Calu3 (cell line): ENCODE measurements at regions of chr20 and their contacts with region 1.

Region 1: GRCh38 chr20:47456952-47457724 is 44.5 kb upstream of the NCOA3 start:
- DNase-seq: peak; percentile 31
- H3K4me3 Mint-ChIP-seq: no peak overlapping the region
- H3K27ac Mint-ChIP-seq: no peak overlapping the region
- H3K4me1 Mint-ChIP-seq: peaks cover 43% of the 10 kb centered on the region
- H3K27me3 Mint-ChIP-seq: no peaks in the 10 kb centered on the region
- CTCF ChIP-seq: no peak

Region 2: DNA sequence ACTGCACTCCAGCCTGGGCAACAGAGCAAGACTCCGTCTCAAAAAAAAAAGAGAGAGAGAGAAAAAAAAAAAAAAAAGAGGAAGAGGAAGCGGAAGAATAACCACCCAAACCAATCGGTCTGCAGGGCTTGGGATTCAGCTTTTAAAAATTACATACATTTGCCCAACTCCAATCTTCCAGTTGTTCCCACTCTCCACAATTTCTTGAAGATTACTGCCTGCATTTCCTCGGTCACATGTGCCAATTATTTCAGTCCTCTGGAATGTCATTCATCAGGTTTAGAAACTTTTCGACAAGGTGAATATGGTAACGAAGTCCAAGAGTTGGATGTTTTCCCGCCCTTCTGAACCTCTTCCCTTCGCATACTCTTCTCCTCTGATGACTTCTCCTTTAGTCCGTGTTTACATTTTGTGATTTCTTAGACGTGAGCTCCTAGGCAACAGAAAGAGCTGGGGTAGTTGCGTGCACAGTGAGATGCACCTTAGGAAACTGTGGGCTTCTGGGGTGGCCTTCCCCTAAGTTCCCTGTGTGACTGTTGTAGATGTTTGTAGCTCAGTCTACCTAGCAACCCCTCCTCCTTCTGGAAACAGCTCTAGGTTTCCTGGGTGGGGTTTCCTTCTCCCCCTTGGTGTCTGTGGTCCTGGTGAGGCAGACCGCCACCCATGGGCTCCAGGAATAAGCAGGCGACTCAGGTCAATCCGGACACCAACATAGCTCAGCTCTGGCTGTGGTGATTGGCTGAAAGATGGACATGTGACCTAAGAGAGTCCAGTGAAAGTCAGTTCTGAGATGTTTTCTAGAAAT is 18.4 kb before region 1 on chr20:
- CTCF ChIA-PET with region 1: interaction called, 11 read pairs
- intact Hi-C with region 1: no loop called
- DNase-seq: peak; percentile 63
- H3K4me3 Mint-ChIP-seq: peak overlapping the region; percentile 31
- H3K27ac Mint-ChIP-seq: peak overlapping the region; percentile 85
- H3K4me1 Mint-ChIP-seq: peaks cover 37% of the 10 kb centered on the region
- H3K27me3 Mint-ChIP-seq: no peaks in the 10 kb centered on the region
- CTCF ChIP-seq: no peak

Region 3: GRCh38 chr20:47493175-47493962 is 36.2 kb after region 1 on chr20:
- CTCF ChIA-PET with region 1: interaction called, 8 read pairs
- intact Hi-C with region 1: loop called (anchors 5 kb)
- DNase-seq: peak; percentile 95
- H3K4me3 Mint-ChIP-seq: peak overlapping the region; percentile 35
- H3K27ac Mint-ChIP-seq: peak overlapping the region; percentile 68
- H3K4me1 Mint-ChIP-seq: peaks cover 37% of the 10 kb centered on the region
- H3K27me3 Mint-ChIP-seq: no peaks in the 10 kb centered on the region
- CTCF ChIP-seq: no peak